ENCODE measurements at regions of chr15 and their contacts with region 1.

Region 1: DNA sequence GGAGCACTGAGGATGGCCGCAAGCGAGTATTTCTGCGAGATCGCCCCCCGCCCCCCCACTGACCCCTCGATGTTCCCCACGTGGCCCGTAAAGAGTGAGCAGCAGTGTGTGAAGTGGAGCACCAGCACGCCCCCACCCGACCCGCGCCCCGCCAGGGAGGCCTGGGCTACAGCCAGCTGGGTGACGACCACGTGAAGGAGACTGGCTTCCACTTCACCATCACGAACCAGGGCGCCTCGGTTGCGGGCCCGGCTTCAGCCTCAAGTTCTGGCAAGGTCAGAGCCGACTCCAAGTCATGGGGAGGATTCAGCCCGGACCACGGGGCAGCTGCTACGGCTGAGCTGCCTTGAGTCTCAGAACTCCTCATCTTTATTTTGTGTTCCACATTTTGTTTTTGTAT is 2.4 kb upstream of the RNU5B-1 start:
- DNase-seq: no peak
- ATAC-seq: no peak

Region 2: DNA sequence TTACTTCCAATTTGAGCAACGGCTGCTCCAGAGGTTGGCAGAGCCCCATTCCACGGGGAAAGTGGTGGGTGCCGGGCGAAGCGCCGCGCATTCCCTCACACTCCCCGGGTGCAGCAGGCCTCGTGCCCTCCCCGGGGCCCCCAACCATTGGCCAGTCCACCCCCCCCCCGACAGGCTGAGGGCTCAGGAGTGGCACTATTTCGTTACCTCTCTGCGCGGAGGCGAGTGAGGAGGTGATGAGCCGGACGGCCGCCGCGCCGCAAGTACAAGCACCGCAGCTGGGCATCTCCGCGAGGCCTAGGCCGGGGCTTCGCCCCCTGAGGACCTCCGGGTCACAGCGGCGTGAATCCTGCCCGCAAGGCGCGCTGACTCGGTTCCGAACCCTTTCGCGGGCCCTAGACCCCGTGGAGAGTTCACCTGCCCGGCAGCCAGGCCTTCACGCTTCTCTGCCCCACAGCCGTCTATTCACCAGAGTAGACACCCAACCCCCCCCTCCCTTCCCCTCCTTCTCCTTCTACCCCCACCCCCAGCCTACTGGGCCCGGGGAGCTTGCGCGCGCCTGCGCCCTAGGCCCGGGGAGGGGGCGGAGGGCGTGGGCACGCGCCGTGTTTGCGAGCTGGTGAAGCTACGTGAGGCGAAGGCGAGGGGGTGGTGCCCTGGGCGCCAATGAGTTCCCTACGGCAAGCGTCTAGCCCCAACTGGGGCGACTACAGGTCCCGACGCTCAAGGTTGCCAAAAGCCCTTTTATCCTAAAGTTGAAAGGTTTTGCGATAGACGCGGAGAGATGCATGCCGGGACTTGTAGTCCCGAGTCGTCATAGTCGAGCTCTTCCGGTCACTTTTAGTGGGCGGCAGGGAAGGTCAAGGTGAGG is 117.0 kb before region 1 on chr15 and contains the start of gene CLPX:
- intact Hi-C with region 1: loop called in 1 of 2 experiments (anchors 2 kb)
- DNase-seq: peak; percentile 95
- ATAC-seq: peak; percentile 96 to 97
- total RNA-seq, gene CLPX: 40.8 to 52.5 TPM

Region 3: GRCh38 chr15:65962187-65962586 is 660.1 kb after region 1 on chr15:
- intact Hi-C with region 1: no loop called
- DNase-seq: no peak
- ATAC-seq: peak in 1 of 2 donors; percentile 22

Measured in left cardiac atrium (tissue), 4 donors.